CD4-positive, alpha-beta memory T cell (primary cell): ENCODE measurements at regions of chr12 and their contacts with region 1.

Region 1: GRCh38 chr12:67592216-67593011 is 56.1 kb upstream of the DYRK2 start:
- DNase-seq: peak in 4 of 5 donors; percentile 29 to 53 (median 44)
- H3K4me3 ChIP-seq: peak overlapping the region in 1 of 2 donors; percentile 25
- H3K4me3 Mint-ChIP-seq: peak overlapping the region in 7 of 8 donors; percentile 45 to 76 (median 69)
- H3K27ac ChIP-seq: no peak overlapping the region
- H3K27ac Mint-ChIP-seq: peak overlapping the region; percentile 33 to 93 (median 82)
- H3K4me1 ChIP-seq: peaks cover 55% of the 10 kb centered on the region
- H3K4me1 Mint-ChIP-seq: peaks cover 36 to 62% (median 50%) of the 10 kb centered on the region in 4 donors
- H3K27me3 ChIP-seq: no peaks in the 10 kb centered on the region
- H3K27me3 Mint-ChIP-seq: no peaks in the 10 kb centered on the region

Region 2: GRCh38 chr12:67558775-67559174 is 33.6 kb before region 1 on chr12:
- CTCF ChIA-PET with region 1: interaction called, 3 read pairs
- POLR2A ChIA-PET with region 1: interaction called, 9 read pairs
- intact Hi-C with region 1: loop called (anchors 5 kb)
- DNase-seq: no peak
- H3K4me3 ChIP-seq: no peak overlapping the region
- H3K4me3 Mint-ChIP-seq: no peak overlapping the region
- H3K27ac ChIP-seq: no peak overlapping the region
- H3K27ac Mint-ChIP-seq: no peak overlapping the region
- H3K4me1 ChIP-seq: peaks cover 22% of the 10 kb centered on the region
- H3K4me1 Mint-ChIP-seq: peaks cover 0 to 18% (median 10%) of the 10 kb centered on the region in 4 donors
- H3K27me3 ChIP-seq: no peaks in the 10 kb centered on the region
- H3K27me3 Mint-ChIP-seq: no peaks in the 10 kb centered on the region

Region 3: GRCh38 chr12:67578976-67579661 is 13.3 kb before region 1 on chr12:
- CTCF ChIA-PET with region 1: interaction called, 9 read pairs
- POLR2A ChIA-PET with region 1: interaction called, 84 read pairs
- intact Hi-C with region 1: no loop called
- DNase-seq: peak; percentile 57 to 75 (median 66)
- H3K4me3 ChIP-seq: peak overlapping the region; percentile 2 to 8
- H3K4me3 Mint-ChIP-seq: peak overlapping the region in 7 of 8 donors; percentile 75 to 89 (median 79)
- H3K27ac ChIP-seq: no peak overlapping the region
- H3K27ac Mint-ChIP-seq: peak overlapping the region; percentile 55 to 89 (median 82)
- H3K4me1 ChIP-seq: peaks cover 49% of the 10 kb centered on the region
- H3K4me1 Mint-ChIP-seq: peaks cover 41 to 65% (median 50%) of the 10 kb centered on the region in 4 donors
- H3K27me3 ChIP-seq: no peaks in the 10 kb centered on the region
- H3K27me3 Mint-ChIP-seq: no peaks in the 10 kb centered on the region

Region 4: GRCh38 chr12:67609226-67609870 is 16.9 kb after region 1 on chr12:
- CTCF ChIA-PET with region 1: interaction called, 7 read pairs
- POLR2A ChIA-PET with region 1: interaction called, 7 read pairs
- intact Hi-C with region 1: loop called (anchors 2 kb)
- DNase-seq: no peak
- H3K4me3 ChIP-seq: no peak overlapping the region
- H3K4me3 Mint-ChIP-seq: no peak overlapping the region
- H3K27ac ChIP-seq: no peak overlapping the region
- H3K27ac Mint-ChIP-seq: peak overlapping the region in 1 of 7 donors; percentile 83
- H3K4me1 ChIP-seq: no peaks in the 10 kb centered on the region
- H3K4me1 Mint-ChIP-seq: peaks cover 0 to 2% (median 0%) of the 10 kb centered on the region in 4 donors
- H3K27me3 ChIP-seq: no peaks in the 10 kb centered on the region
- H3K27me3 Mint-ChIP-seq: no peaks in the 10 kb centered on the region